PC-3 (cell line): ENCODE measurements at regions of chr15 and their contacts with region 1.

Region 1: GRCh38 chr15:50893976-50894375 is 14.5 kb upstream of the AP4E1 start:
- DNase-seq: no peak
- ATAC-seq: no peak
- H3K4me3 ChIP-seq: no peak overlapping the region
- H3K27ac ChIP-seq: no peak overlapping the region
- H3K4me1 ChIP-seq: no peaks in the 10 kb centered on the region
- H3K27me3 ChIP-seq: no peaks in the 10 kb centered on the region
- CTCF ChIP-seq: no peak

Region 2: GRCh38 chr15:50670115-50670514 is 223.9 kb before region 1 on chr15:
- CTCF ChIA-PET with region 1: no interaction called
- POLR2A ChIA-PET with region 1: interaction called, 12 read pairs
- intact Hi-C with region 1: no loop called
- DNase-seq: no peak
- ATAC-seq: no peak
- H3K4me3 ChIP-seq: no peak overlapping the region
- H3K27ac ChIP-seq: no peak overlapping the region
- H3K4me1 ChIP-seq: no peaks in the 10 kb centered on the region
- H3K27me3 ChIP-seq: no peaks in the 10 kb centered on the region
- CTCF ChIP-seq: no peak